ENCODE measurements at regions of chr15 and their contacts with region 1.

Region 1: GRCh38 chr15:32974691-32975090 is 219.8 kb downstream of the FMN1 start:
- DNase-seq: no peak
- H3K4me3 ChIP-seq: no peak overlapping the region
- H3K27ac ChIP-seq: peak overlapping the region in 1 of 4 donors; percentile 50
- H3K4me1 ChIP-seq: peaks cover 0 to 40% (median 11%) of the 10 kb centered on the region in 4 donors
- H3K27me3 ChIP-seq: no peaks in the 10 kb centered on the region
- CTCF ChIP-seq: no peak
- EP300 ChIP-seq: no peak
- POLR2A ChIP-seq: no peak

Region 2: GRCh38 chr15:32870240-32871033 is 104.3 kb before region 1 on chr15:
- intact Hi-C with region 1: loop called (anchors 5 kb)
- DNase-seq: no peak
- H3K4me3 ChIP-seq: no peak overlapping the region
- H3K27ac ChIP-seq: peak overlapping the region in 3 of 4 donors; percentile 76 to 87 (median 76)
- H3K4me1 ChIP-seq: peaks cover 0 to 55% (median 35%) of the 10 kb centered on the region in 4 donors
- H3K27me3 ChIP-seq: no peaks in the 10 kb centered on the region
- CTCF ChIP-seq: no peak
- EP300 ChIP-seq: peak in 1 of 4 donors; percentile 21
- POLR2A ChIP-seq: no peak